ENCODE measurements at regions of chr2 and their contacts with region 1.

Region 1: DNA sequence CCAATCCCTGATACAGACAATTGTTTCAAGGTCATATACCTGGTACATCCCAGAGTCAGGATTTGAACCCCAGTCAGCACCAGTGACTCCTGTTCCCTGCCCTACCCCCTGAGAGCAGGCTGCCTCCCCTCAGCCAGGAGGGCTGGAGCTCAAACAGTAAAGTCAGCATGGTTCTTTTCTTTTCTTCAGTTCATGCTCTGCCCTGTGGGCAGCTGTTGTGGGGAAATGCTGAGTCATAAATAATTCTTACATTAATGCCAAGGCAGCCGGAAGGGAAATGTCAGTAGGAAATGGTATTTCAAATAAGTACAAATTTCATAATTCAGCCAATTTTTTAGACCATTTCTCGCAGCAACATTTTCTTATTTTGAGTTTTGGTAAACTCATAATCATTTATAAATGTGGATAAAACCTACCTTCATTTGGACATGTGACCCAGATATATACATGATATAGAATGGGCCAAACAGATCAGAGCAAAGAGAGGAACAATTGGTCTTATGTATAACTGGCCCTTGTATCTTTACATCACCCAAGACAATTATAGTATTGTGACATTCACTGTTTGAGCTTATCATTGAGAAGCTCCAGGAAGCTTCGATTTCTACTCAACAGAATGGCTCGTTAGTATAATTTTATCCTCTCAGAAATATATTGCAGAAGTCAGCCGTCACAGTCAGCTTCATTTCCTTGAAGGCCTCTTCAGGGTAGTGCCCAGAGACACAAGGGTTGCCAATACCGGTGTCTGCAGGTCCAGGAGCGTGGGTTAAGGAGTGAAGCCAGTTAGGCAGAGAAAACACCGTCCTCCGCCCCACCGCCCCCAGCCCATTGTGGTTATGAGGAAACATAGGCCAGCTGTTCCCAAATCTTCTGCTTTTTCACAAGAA is 28.0 kb upstream of the SCYGR1 start:
- DNase-seq: no peak
- H3K4me3 Mint-ChIP-seq: no peak overlapping the region
- H3K27ac Mint-ChIP-seq: no peak overlapping the region
- H3K4me1 Mint-ChIP-seq: peaks cover 14% of the 10 kb centered on the region
- H3K27me3 Mint-ChIP-seq: no peaks in the 10 kb centered on the region
- CTCF ChIP-seq: no peak

Region 2: DNA sequence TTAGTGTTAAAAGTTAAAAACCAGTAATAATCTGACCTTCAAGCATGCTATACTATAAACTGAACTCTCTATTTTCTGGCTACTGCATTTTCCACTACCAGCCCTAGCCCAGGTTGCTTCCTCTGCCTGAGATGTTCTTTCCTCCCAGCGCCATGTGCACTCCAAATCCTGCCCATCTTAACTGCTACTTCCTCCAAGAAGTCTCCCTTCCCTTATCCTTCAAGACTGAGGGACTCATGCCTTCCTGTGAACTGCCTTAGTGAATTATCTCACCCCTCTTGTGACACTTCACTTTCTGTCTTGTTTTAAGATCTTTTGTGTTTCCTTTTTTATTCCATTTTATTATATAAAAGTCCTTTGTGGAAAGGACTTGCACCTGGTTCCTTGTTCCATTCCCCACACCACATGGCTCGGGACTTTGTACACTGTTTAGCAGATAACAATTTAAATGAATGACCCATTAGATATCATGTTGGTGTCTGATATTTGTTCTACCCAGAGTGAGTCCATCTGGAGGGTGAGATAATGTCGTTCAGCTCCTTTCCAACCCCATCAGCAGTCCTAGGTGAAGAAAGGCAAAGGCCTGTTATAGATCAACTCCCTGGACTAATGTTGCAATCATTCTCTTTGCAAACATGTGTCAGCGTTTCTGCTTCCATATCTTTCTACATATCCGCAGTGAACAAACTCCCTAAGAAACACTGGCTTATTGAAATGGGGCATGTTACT is 35.3 kb after region 1 on chr2:
- CTCF ChIA-PET with region 1: no interaction called
- intact Hi-C with region 1: loop called (anchors 2 kb)
- DNase-seq: no peak
- H3K4me3 Mint-ChIP-seq: no peak overlapping the region
- H3K27ac Mint-ChIP-seq: peak overlapping the region; percentile 63
- H3K4me1 Mint-ChIP-seq: peaks cover 39% of the 10 kb centered on the region
- H3K27me3 Mint-ChIP-seq: no peaks in the 10 kb centered on the region
- CTCF ChIP-seq: no peak